ENCODE measurements at regions of chr1 and their contacts with region 1.

Region 1: DNA sequence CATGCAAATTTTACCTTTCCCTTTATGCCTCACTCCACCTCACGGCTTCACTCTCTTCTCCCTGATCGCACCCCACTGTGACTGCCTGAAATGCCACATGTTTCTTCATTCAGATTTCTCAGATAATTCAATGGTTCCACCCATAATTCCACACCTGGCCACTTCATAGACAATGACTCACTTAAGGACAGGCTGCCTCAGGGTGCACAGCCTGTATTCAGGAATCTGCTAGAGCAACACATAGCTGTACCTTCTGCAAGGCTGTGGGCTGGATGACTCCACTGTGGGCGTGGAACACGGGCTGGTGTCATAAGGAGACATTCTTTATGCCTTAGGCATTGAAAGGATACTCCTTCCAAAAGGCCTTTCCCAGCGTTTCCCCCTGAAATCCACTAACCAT is 36.1 kb downstream of the L1TD1 start:
- DNase-seq: peak; percentile 99
- H3K4me3 ChIP-seq: no peak overlapping the region
- H3K27ac ChIP-seq: peak overlapping the region; percentile 82
- H3K4me1 ChIP-seq: peaks cover 53% of the 10 kb centered on the region
- H3K27me3 ChIP-seq: no peaks in the 10 kb centered on the region
- CTCF ChIP-seq: no peak

Region 2: DNA sequence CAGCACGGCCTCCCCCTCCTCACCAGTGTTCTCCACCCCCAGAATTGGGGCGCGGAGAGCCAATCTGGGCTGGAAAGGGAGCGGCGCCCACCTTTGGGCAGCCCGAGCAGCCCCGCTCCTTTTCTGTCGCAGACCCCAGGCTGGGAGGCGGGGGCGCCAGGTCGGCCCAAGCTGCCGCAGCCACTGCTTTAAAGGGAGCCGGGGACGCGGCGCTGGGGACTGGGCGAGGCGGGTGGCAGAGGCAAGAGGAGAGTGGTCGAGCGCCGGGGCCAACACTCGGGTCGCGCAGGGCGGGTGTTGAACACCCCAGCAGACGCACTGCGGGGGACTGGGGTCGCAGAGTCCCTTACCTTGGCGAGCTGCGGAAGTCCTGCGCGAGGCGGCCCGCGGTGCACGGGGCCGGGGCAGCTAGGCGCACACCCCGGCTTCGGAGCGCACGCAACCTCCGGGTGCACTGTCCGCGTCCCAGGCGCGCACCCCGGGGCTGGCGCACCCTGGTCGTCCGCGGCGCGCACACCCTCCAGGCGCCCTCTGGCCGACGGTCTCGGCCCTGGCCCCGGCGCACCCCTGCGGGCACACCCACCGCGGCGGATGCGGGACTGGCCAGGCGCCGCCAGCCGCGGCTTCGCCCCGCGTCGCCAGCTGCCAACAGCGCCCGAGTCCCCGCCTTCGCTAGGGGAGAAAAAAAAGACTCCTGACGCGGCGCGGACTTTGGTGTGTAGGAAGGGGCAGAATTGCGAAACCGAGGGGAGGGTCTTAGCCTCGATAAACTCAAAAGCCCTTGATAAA is 88.2 kb after region 1 on chr1 and contains the start of gene KANK4:
- CTCF ChIA-PET with region 1: no interaction called
- dilution Hi-C with region 1: no loop called
- in situ Hi-C with region 1: no loop called
- intact Hi-C with region 1: loop called (anchors 5 kb)
- DNase-seq: no peak
- H3K4me3 ChIP-seq: peak within 1 kb of the TSS; percentile 45 to 64 (median 61)
- H3K27ac ChIP-seq: no peak within 1 kb of the TSS
- H3K4me1 ChIP-seq: peaks cover 17% of the 10 kb centered on the region
- H3K27me3 ChIP-seq: no peaks in the 10 kb centered on the region
- CTCF ChIP-seq: no peak
- total RNA-seq, gene KANK4: 4.5 to 32.2 TPM

Region 3: DNA sequence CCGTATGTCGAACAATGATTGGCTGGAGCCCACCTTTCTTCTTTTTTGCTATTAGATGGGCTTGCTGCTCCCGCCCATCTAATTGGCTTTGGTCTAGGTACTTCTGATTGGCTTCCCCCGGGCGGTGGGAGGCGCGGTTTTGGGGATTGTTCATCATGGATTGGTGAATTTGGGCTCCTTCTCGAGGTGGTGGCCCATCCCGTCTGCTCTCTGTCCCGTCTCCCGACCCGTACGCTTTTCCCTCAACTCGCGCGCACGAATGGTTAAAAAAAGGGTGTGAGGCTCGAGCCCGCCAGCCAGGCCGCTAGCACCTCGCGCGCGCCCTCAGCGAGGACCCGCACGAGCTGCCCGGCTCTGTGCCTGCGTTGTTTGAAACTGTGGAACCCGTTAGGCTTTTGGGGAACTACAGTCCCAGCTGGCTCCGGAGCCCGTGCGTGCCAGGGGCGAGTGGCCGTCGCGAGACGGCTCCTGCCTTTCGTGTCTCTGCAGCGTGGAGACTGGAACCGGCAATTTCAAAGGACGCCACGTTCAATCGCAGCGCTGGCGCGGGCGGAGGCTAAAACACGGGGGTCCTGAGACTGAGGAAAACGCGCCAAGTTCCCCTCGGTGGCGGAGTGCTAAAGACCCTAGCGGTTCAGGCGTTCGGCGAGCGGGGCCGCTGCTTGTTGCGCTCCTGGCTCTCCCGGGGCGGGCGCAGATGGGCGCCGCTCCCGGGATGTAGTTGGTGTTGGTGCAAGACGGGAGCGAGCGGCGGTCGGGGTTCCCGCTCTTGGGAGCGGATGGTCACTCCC is 206.0 kb after region 1 on chr1 and contains the start of gene USP1:
- CTCF ChIA-PET with region 1: no interaction called
- dilution Hi-C with region 1: no loop called
- in situ Hi-C with region 1: no loop called
- intact Hi-C with region 1: loop called (anchors 2 kb)
- DNase-seq: peak; percentile 100
- H3K4me3 ChIP-seq: peak within 1 kb of the TSS; percentile 64 to 88 (median 76)
- H3K27ac ChIP-seq: peak within 1 kb of the TSS; percentile 98
- H3K4me1 ChIP-seq: peaks cover 8% of the 10 kb centered on the region
- H3K27me3 ChIP-seq: no peaks in the 10 kb centered on the region
- CTCF ChIP-seq: no peak
- total RNA-seq, gene USP1: 15.3 to 36.4 TPM